ENCODE measurements at regions of chrX and their contacts with region 1.

Region 1: GRCh38 chrX:120380699-120381098 is 18.8 kb downstream of the ATP1B4 start:
- DNase-seq: peak in 4 of 5 donors; percentile 3 to 43 (median 34)
- H3K4me3 ChIP-seq: no peak overlapping the region
- H3K4me3 Mint-ChIP-seq: no peak overlapping the region
- H3K27ac ChIP-seq: no peak overlapping the region
- H3K27ac Mint-ChIP-seq: peak overlapping the region in 1 of 8 donors; percentile 55
- H3K4me1 ChIP-seq: no peaks in the 10 kb centered on the region
- H3K4me1 Mint-ChIP-seq: peaks cover 3 to 7% (median 6%) of the 10 kb centered on the region in 3 donors
- H3K27me3 ChIP-seq: no peaks in the 10 kb centered on the region
- H3K27me3 Mint-ChIP-seq: peaks cover 2 to 3% of the 10 kb centered on the region in 2 donors

Region 2: GRCh38 chrX:120452131-120452530 is 71.4 kb after region 1 on chrX:
- CTCF ChIA-PET with region 1: interaction called, 15 read pairs
- POLR2A ChIA-PET with region 1: no interaction called
- DNase-seq: no peak
- H3K4me3 ChIP-seq: no peak overlapping the region
- H3K4me3 Mint-ChIP-seq: no peak overlapping the region
- H3K27ac ChIP-seq: no peak overlapping the region
- H3K27ac Mint-ChIP-seq: peak overlapping the region in 3 of 8 donors; percentile 4 to 27 (median 6)
- H3K4me1 ChIP-seq: peaks cover 8% of the 10 kb centered on the region
- H3K4me1 Mint-ChIP-seq: peaks cover 6 to 29% (median 16%) of the 10 kb centered on the region in 3 donors
- H3K27me3 ChIP-seq: no peaks in the 10 kb centered on the region
- H3K27me3 Mint-ChIP-seq: no peaks in the 10 kb centered on the region